ENCODE measurements at regions of chr14 and their contacts with region 1.

Region 1: GRCh38 chr14:60805841-60806569 is 71.4 kb downstream of the MNAT1 start:
- DNase-seq: peak; percentile 93
- ATAC-seq: peak; percentile 87
- H3K4me3 ChIP-seq: no peak overlapping the region
- H3K27ac ChIP-seq: peak overlapping the region; percentile 51
- H3K4me1 ChIP-seq: peaks cover 36% of the 10 kb centered on the region
- H3K27me3 ChIP-seq: no peaks in the 10 kb centered on the region
- CTCF ChIP-seq: no peak

Region 2: DNA sequence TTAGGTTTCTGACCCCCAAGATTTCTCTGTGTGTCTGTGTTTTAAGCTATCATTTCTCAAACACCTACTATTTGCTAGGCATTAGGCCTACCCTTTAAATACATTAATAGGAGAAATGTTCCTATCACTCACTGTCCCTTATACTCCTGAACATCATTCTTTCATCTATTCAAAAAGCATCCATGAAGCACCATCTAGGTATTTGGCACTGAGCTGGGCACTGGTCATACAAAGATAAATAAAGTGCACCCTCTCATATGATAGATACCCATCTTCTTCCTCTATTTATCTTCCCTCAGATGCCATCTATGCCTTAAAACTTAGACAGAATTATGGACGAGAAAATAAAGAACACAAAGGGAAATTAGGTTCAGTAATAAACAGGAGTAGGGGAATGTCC is 177.1 kb before region 1 on chr14:
- CTCF ChIA-PET with region 1: no interaction called
- POLR2A ChIA-PET with region 1: no interaction called
- intact Hi-C with region 1: loop called (anchors 5 kb)
- DNase-seq: no peak
- ATAC-seq: no peak
- H3K4me3 ChIP-seq: no peak overlapping the region
- H3K27ac ChIP-seq: no peak overlapping the region
- H3K4me1 ChIP-seq: peaks cover 15% of the 10 kb centered on the region
- H3K27me3 ChIP-seq: no peaks in the 10 kb centered on the region
- CTCF ChIP-seq: no peak

Region 3: GRCh38 chr14:60656686-60657455 is 149.1 kb before region 1 on chr14:
- CTCF ChIA-PET with region 1: no interaction called
- POLR2A ChIA-PET with region 1: interaction called, 8 read pairs
- intact Hi-C with region 1: loop called (anchors 5 kb)
- DNase-seq: peak; percentile 76
- ATAC-seq: peak; percentile 59
- H3K4me3 ChIP-seq: peak overlapping the region; percentile 80
- H3K27ac ChIP-seq: peak overlapping the region; percentile 19
- H3K4me1 ChIP-seq: peaks cover 31% of the 10 kb centered on the region
- H3K27me3 ChIP-seq: no peaks in the 10 kb centered on the region
- CTCF ChIP-seq: peak; percentile 83

Region 4: DNA sequence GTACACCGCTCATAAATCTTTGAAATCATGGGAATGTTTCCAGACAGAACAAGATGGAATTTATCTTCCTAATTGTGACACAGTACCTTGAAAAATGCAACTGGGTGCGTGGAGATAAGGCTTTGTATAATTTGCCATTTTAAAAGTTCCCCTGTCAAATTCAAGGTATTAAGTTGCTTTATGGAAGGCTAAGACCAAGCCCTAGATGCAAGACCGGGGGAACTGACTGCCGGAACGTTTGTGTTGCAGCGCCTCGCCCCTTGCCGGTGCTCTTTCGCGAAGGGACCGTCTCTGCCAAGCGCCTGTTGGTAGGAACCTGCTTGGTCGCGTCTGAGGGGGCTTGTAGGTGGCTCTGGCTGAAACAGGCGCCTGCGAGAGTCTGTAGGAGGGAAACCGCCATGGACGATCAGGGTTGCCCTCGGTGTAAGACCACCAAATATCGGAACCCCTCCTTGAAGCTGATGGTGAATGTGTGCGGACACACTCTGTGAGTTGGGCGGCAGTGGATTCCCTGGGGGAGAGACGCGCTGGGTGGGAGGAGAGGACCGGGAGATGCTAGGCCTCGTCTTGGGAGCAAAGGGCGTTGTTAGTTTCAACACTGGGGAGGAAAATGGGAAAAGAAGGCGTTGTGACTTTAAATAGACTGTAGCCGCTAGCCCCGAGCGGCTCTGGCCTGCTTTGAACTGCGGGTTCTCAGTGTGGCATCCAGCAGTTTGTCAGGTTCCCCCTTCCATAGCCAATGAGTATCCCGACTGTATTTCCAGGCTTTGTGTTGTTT is 71.4 kb before region 1 on chr14 and contains the start of gene MNAT1:
- CTCF ChIA-PET with region 1: no interaction called
- POLR2A ChIA-PET with region 1: no interaction called
- intact Hi-C with region 1: loop called (anchors 1 kb)
- DNase-seq: peak; percentile 95
- ATAC-seq: peak; percentile 84
- H3K4me3 ChIP-seq: peak within 1 kb of the TSS; percentile 94
- H3K27ac ChIP-seq: no peak within 1 kb of the TSS
- H3K4me1 ChIP-seq: peaks cover 15% of the 10 kb centered on the region
- H3K27me3 ChIP-seq: no peaks in the 10 kb centered on the region
- CTCF ChIP-seq: no peak
- total RNA-seq, gene MNAT1: 88.6 and 95.7 TPM in 2 replicates

Region 5: DNA sequence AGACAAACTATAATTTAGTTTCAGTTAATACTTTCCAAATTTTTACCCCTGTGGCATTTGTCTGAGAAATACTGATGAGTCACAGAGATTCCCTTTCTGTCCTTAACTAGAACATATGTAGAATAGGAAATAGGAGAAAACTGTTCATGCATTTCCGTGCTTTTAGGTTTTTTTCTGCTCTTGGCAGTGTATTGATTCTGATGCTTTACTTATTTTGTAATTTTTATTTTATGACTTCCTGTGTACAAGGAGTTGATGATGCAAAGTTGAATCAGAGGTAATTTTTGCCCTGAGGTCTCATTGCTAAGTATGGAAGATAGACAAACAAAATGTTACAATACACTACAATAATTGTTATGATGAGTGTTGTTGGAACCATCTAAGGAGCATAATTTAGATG is 48.4 kb before region 1 on chr14:
- CTCF ChIA-PET with region 1: no interaction called
- POLR2A ChIA-PET with region 1: no interaction called
- intact Hi-C with region 1: loop called (anchors 1 kb)
- DNase-seq: peak; percentile 98
- ATAC-seq: peak; percentile 81
- H3K4me3 ChIP-seq: peak overlapping the region; percentile 41
- H3K27ac ChIP-seq: peak overlapping the region; percentile 78
- H3K4me1 ChIP-seq: peaks cover 59% of the 10 kb centered on the region
- H3K27me3 ChIP-seq: no peaks in the 10 kb centered on the region
- CTCF ChIP-seq: no peak

Region 6: GRCh38 chr14:60965402-60965801 is 159.4 kb after region 1 on chr14:
- CTCF ChIA-PET with region 1: no interaction called
- POLR2A ChIA-PET with region 1: no interaction called
- intact Hi-C with region 1: loop called (anchors 5 kb)
- DNase-seq: peak; percentile 66
- ATAC-seq: peak; percentile 92
- H3K4me3 ChIP-seq: no peak overlapping the region
- H3K27ac ChIP-seq: peak overlapping the region; percentile 27
- H3K4me1 ChIP-seq: peaks cover 5% of the 10 kb centered on the region; the same call in 1 of the 2 replicates
- H3K27me3 ChIP-seq: no peaks in the 10 kb centered on the region
- CTCF ChIP-seq: no peak

Region 7: GRCh38 chr14:61178226-61179060 is 372.4 kb after region 1 on chr14:
- CTCF ChIA-PET with region 1: no interaction called
- POLR2A ChIA-PET with region 1: interaction called, 12 read pairs
- intact Hi-C with region 1: no loop called
- DNase-seq: peak; percentile 99
- ATAC-seq: peak; percentile 91
- H3K4me3 ChIP-seq: peak overlapping the region; percentile 20; the same call in 1 of the 2 replicates
- H3K27ac ChIP-seq: peak overlapping the region; percentile 93
- H3K4me1 ChIP-seq: peaks cover 39% of the 10 kb centered on the region
- H3K27me3 ChIP-seq: no peaks in the 10 kb centered on the region
- CTCF ChIP-seq: no peak

Measured in PC-3 (cell line).